ENCODE measurements at regions of chr16 and their contacts with region 1.

Region 1: GRCh38 chr16:49592546-49593423 is 219.2 kb downstream of the C16orf78 start:
- DNase-seq: peak; percentile 36
- ATAC-seq: peak; percentile 77
- H3K4me3 ChIP-seq: no peak overlapping the region
- H3K27ac ChIP-seq: no peak overlapping the region
- H3K4me1 ChIP-seq: no peaks in the 10 kb centered on the region
- H3K27me3 ChIP-seq: no peaks in the 10 kb centered on the region; the same call in 1 of the 2 replicates
- CTCF ChIP-seq: peak; percentile 81

Region 2: DNA sequence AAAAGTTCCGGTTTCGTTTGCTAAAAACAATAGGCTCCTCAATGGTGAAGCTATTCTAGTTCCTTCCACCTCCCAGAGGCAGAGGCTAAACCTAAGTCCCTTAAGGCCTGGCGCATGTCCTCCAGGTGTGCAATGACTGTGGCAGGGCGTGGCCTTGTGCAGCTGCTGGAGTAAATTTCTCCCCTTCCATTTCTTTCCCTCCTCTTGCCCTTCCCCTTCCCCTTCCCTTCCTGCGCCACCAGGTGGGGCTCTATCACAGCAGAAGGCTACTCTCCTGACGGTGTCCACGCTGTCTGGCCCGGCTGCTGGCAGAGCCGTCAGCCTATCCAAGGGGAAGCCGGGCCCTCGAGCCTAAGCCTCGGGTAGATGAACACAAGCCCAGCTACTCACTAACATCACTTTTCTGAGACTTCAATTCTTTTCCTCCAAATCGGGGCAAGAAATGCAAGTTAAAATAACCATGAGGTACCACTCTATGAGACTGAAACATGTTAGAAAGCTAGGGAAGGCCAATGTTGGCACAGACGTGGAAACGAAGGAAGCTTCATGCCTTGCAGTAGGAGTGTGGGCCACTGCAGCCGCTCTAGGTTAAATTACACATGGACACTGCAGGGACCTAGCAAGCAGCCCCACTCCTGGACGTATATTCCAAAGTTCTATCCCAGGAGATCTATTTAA is 184.8 kb before region 1 on chr16:
- CTCF ChIA-PET with region 1: interaction called, 3 read pairs
- POLR2A ChIA-PET with region 1: no interaction called
- in situ Hi-C with region 1: no loop called
- intact Hi-C with region 1: loop called (anchors 5 kb)
- DNase-seq: peak; percentile 32
- ATAC-seq: peak; percentile 100
- H3K4me3 ChIP-seq: no peak overlapping the region
- H3K27ac ChIP-seq: no peak overlapping the region
- H3K4me1 ChIP-seq: no peaks in the 10 kb centered on the region
- H3K27me3 ChIP-seq: no peaks in the 10 kb centered on the region
- CTCF ChIP-seq: peak; percentile 84

Region 3: DNA sequence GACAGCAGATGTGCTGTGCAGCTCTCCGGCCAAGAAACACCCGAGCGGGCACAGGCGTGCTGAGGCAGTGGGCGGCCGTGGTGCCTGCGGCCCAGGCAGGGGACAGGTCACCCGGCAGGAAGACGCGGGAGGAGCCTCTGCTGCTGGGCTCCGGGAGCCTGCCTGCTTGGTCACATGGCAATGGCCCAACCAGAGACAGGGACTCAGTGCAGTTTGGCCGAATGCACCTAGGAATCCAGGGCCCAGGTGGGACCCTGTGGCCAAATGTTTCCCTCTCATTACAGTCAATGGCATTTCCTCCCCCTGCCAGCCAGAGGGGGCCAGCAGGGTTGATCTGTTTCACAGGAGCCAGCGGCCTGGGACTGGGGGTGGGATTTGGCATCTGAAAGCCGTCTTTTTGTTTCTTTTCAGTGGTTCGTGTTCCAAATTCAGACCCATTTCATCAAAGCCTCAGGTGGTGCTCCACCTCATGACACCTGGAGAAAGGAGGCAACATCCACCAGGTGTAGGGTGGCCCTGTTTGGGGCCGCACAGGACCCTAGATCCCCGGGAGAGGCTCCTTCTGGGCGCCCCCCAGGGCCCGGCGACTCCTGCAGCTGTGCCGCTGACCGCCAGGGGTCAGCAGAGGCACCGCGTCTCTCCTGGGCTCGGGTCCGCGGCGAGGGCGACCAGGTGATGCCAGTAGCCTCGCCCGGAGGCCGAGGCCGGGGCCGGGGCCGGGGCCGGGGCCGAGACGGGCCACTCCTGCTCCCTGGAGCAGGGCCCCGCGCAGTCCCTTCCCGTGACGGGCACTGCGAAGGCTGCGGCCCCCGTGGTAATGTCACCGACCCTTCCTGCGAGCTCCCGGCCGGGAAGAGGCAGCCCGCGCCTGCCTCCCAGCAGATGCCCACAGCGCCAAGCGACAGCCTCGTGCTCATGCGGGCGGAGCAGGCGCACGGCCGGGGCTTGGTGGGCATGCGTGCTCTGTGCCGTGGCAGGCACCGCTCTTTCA is 100.7 kb before region 1 on chr16:
- CTCF ChIA-PET with region 1: no interaction called
- POLR2A ChIA-PET with region 1: no interaction called
- in situ Hi-C with region 1: no loop called
- intact Hi-C with region 1: loop called (anchors 5 kb)
- DNase-seq: no peak
- ATAC-seq: peak; percentile 86
- H3K4me3 ChIP-seq: peak overlapping the region in 1 of 2 experiments; percentile 11; a peak in 1 of 4 replicates
- H3K27ac ChIP-seq: no peak overlapping the region
- H3K4me1 ChIP-seq: no peaks in the 10 kb centered on the region
- H3K27me3 ChIP-seq: no peaks in the 10 kb centered on the region; the same call in 1 of the 2 replicates
- CTCF ChIP-seq: peak; percentile 93